Right ventricle myocardium inferior (tissue), 1 donor: ENCODE measurements at regions of chr9 and their contacts with region 1.

Region 1: GRCh38 chr9:134135343-134136118 is at the start of gene WDR5:
- DNase-seq: peak; percentile 96
- ATAC-seq: peak; percentile 86
- total RNA-seq, gene WDR5: 18.2 TPM

Region 2: DNA sequence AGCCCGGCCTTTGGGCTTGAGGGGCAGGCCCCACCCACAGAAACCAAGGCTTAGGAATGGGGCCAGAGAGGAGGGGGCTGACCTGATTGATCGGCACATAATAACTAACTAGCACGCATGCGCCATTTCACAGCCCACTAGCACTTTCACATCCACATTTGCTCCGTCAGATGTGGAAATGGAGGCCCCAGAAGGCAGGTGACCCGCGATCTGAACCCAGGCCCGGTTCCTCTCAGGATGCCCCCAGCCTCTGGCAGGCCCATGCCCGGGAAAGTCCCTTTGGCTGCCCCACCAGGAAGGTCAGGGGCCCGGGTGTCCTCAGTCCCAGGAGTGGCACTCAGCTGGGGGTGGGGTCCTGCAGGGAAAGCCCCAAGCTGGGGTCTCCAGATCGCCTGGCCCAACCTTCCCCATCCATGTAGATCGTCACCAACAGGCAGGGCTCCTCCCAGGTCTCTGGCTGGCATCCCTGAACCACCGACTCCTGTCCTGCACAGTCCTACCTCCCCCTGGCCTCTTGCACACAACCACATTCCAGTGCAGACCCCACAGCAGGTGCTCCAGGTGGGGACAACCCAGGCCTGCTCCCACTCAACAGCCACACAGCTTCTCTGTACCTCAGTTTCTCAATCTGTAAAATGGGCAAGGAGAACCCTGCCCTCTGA is 190.1 kb before region 1 on chr9:
- intact Hi-C with region 1: no loop called
- DNase-seq: peak; percentile 21
- ATAC-seq: no peak

Region 3: DNA sequence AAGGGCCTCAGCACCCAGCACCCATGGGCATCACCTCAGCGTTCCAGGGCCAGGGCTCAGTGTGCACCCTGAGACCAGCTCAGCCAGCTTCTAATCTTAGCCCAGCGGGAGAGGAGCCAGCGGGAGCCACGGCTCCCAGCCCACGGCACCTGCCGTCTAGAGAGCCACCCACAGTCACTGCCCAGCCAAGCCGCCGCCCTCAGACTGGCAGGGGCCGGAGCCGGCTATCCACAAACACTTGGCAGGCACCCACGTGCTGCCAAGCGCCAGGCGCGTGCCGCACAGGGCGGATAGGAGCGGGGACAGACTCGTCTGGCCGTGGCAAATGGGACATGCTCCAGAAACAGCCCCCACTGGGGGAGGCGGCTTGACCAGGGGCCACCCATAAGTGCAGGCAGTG is 86.3 kb before region 1 on chr9:
- intact Hi-C with region 1: loop called (anchors 5 kb)
- DNase-seq: peak; percentile 85
- ATAC-seq: peak; percentile 84

Region 4: DNA sequence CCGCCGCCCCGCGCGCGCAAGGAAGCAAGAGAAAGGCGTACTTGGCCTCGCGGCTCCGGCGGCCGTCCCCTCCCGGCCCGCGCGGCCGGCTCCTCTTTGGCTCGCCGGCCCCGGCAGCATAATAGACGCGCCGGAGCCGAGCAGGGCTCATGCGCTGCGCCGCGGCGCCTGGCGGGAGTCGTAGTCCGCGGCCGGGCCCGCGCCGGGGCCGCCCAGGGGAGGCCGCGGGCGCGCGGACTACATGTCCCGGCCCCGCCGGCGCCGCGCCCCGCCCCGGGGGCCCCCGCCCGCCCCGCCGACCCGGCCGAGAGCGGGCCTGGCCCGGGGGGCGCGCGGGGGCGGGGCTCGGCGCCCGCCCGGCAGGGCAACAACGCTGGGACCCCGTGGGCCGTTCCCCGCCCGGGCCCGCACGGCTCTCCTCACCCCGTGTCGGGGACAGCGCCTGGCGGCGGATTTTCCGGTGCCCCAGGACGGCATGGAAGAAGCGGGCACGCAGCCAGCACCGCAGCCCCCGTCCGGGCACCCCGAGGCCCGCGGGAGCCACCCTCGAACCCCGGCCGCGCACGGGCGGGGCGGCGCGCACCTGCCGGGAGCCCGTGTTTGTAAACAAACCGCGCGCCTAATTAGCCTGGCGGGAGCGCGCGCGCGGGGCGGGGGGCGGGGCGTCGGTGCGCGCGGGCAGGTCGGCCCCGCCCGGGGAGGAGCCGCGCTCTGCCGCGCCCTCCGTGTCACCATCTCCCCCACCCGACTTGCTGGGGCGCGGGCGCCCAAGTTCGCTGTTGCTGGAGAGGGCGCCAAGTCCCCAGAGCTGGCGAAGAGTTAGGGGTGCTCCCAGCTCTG is 67.4 kb before region 1 on chr9 and contains the start of gene BRD3:
- intact Hi-C with region 1: loop called (anchors 2 kb)
- DNase-seq: peak; percentile 95
- ATAC-seq: peak; percentile 97
- total RNA-seq, gene BRD3: 31.6 TPM

Region 5: GRCh38 chr9:134163353-134164196 is 28.0 kb after region 1 on chr9:
- intact Hi-C with region 1: loop called (anchors 2 kb)
- DNase-seq: peak; percentile 84
- ATAC-seq: peak; percentile 14